Motor neuron (in vitro differentiated cells): ENCODE measurements at regions of chr6 and their contacts with region 1.

Region 1: DNA sequence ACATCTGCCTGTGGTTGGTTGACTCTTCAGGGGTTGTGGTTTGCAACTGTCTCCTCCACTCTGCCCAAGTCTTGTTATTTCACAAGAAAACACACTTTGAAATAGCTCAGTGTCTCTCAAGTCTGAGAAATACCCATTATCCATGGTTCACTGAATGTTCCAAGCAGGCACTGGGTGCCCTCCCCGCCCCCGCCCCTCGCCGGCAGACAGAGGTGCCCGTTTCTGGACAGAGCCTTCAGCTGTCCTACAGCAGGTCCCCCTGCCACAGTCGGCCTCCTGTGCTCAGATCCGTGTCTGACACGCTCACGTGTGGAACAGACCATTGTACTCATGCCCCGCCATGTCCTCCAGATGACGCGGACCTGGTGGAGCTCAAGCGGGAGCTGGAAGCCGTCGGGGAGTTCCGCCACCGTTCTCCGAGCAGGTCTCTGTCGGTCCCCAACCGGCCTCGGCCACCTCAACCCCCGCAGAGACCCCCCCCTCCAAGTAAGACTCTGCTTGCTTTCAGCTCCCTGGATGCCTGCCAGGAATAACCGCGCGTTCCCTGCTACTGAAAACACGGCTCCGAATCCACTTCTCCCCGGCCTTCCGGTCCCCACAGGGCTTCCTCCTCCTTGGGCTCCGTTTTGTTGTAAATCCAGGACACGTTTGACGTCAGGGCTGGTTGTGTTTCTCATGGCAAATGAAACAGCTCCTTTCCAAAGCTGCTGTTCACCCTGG is 81.4 kb downstream of the SERAC1 start:
- ATAC-seq: no peak
- H3K4me3 ChIP-seq: no peak overlapping the region
- H3K27ac ChIP-seq: no peak overlapping the region
- H3K4me1 ChIP-seq: no peaks in the 10 kb centered on the region

Region 2: GRCh38 chr6:157764178-157765033 is 322.3 kb before region 1 on chr6:
- in situ Hi-C with region 1: loop called in 1 of 9 experiments (anchors 25 kb)
- ATAC-seq: peak; percentile 85 to 97 (median 94)
- H3K4me3 ChIP-seq: no peak overlapping the region
- H3K27ac ChIP-seq: peak overlapping the region in 1 of 2 donors; percentile 49
- H3K4me1 ChIP-seq: peaks cover 13 to 15% of the 10 kb centered on the region in 2 donors

Region 3: DNA sequence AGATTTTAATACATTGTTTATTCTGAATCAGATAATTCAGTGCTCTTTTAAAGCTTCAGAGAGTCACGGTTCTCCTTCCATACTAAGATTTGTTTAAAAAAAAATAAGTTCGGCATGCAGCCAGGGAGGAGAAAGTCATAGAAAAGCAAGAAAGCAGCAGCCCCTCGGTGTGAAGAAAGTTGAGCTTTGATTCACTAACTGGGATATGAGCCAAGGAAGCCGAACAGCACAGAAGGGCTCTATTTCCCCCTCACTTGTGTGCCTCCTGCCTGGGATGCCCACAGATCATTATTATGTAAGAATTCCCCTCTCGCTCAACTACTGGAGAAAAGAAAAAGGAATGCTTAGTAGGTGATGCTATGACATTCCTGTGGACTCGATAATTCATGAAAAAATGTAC is 174.3 kb before region 1 on chr6:
- in situ Hi-C with region 1: loop called in 1 of 9 experiments (anchors 25 kb)
- ATAC-seq: peak in 4 of 8 experiments; percentile 42 to 90 (median 60)
- H3K4me3 ChIP-seq: no peak overlapping the region
- H3K27ac ChIP-seq: no peak overlapping the region
- H3K4me1 ChIP-seq: no peaks in the 10 kb centered on the region